CD4-positive, alpha-beta T cell (primary cell): ENCODE measurements at regions of chr12 and their contacts with region 1.

Region 1: GRCh38 chr12:56468216-56469006 is at the start of gene SPRYD4:
- DNase-seq: peak; percentile 88 to 98 (median 93)
- ATAC-seq: peak; percentile 90
- H3K4me3 ChIP-seq: peak within 1 kb of the TSS; percentile 87
- H3K4me3 Mint-ChIP-seq: peak within 1 kb of the TSS; percentile 96
- H3K27ac ChIP-seq: peak within 1 kb of the TSS; percentile 68 to 94
- H3K27ac Mint-ChIP-seq: peak within 1 kb of the TSS; percentile 97
- H3K4me1 ChIP-seq: peaks cover 29% of the 10 kb centered on the region
- H3K4me1 Mint-ChIP-seq: peaks cover 31% of the 10 kb centered on the region
- H3K27me3 ChIP-seq: no peaks in the 10 kb centered on the region
- H3K27me3 Mint-ChIP-seq: no peaks in the 10 kb centered on the region
- CTCF ChIP-seq: peak; percentile 34
- total RNA-seq, gene SPRYD4: 7.4 to 7.9 TPM

Region 2: GRCh38 chr12:56258057-56258819 is 210.2 kb before region 1 on chr12 and contains the start of gene ANKRD52:
- CTCF ChIA-PET with region 1: no interaction called
- POLR2A ChIA-PET with region 1: no interaction called
- intact Hi-C with region 1: loop called in 1 of 2 experiments (anchors 2 kb)
- DNase-seq: peak; percentile 59 to 94 (median 75)
- ATAC-seq: peak; percentile 94
- H3K4me3 ChIP-seq: peak within 1 kb of the TSS; percentile 96
- H3K4me3 Mint-ChIP-seq: peak within 1 kb of the TSS; percentile 98
- H3K27ac ChIP-seq: peak within 1 kb of the TSS; percentile 31 to 58
- H3K27ac Mint-ChIP-seq: peak within 1 kb of the TSS; percentile 77
- H3K4me1 ChIP-seq: peaks cover 27% of the 10 kb centered on the region
- H3K4me1 Mint-ChIP-seq: peaks cover 20% of the 10 kb centered on the region
- H3K27me3 ChIP-seq: no peaks in the 10 kb centered on the region
- H3K27me3 Mint-ChIP-seq: no peaks in the 10 kb centered on the region
- CTCF ChIP-seq: peak; percentile 26
- total RNA-seq, gene ANKRD52: 23.9 to 30.8 TPM

Region 3: DNA sequence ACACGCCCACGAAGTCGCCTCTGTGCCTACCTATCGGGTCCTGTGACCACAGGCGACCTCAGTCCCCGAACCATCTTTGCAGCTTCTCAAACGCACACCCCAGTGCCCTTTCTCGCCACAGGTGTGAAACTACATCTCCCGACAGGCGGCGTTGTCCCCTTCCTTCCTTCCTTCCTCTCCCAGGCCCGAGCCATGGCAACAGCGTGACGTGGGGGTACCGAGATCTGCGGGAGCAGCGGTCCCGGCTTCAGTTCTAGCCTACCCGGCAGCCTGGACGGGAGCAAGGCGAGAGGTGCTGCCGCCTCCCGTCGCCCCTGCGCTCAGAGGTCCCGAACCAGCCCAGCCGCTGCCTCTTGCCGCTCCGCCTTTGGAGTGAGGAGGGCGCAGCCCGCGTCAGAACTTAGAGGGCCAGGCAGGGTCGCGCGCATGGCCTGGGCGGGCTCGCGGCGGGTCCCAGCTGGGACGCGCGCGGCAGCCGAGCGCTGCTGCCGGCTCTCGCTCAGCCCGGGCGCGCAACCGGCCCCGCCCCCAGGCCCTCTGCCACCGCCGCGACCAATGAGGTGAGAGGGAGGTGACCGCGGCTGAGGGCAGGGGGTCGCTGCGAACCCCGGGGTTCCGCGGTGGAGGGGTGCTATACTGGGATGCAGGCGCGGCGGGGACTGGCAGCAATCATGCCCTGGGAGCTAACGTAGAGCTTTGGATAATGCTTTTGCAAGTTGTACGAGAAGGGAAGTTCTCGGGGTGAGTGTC is 201.5 kb before region 1 on chr12 and contains the start of gene COQ10A:
- CTCF ChIA-PET with region 1: interaction called, 4 read pairs
- POLR2A ChIA-PET with region 1: interaction called, 7 read pairs
- intact Hi-C with region 1: loop called in 1 of 2 experiments (anchors 2 kb)
- DNase-seq: peak; percentile 77 to 95 (median 88)
- ATAC-seq: peak; percentile 88
- H3K4me3 ChIP-seq: peak within 1 kb of the TSS; percentile 72
- H3K4me3 Mint-ChIP-seq: peak within 1 kb of the TSS; percentile 96
- H3K27ac ChIP-seq: peak within 1 kb of the TSS; percentile 91 to 96
- H3K27ac Mint-ChIP-seq: peak within 1 kb of the TSS; percentile 91
- H3K4me1 ChIP-seq: peaks cover 16% of the 10 kb centered on the region
- H3K4me1 Mint-ChIP-seq: peaks cover 17% of the 10 kb centered on the region
- H3K27me3 ChIP-seq: no peaks in the 10 kb centered on the region
- H3K27me3 Mint-ChIP-seq: no peaks in the 10 kb centered on the region
- CTCF ChIP-seq: peak; percentile 64
- total RNA-seq, gene COQ10A: 27.6 to 29.2 TPM

Region 4: GRCh38 chr12:56315622-56316473 is 152.6 kb before region 1 on chr12 and contains the start of gene CNPY2:
- CTCF ChIA-PET with region 1: interaction called, 22 read pairs
- POLR2A ChIA-PET with region 1: interaction called, 16 read pairs
- intact Hi-C with region 1: loop called (anchors 1 to 5 kb)
- DNase-seq: peak; percentile 86 to 96 (median 90)
- ATAC-seq: peak; percentile 93
- H3K4me3 ChIP-seq: peak within 1 kb of the TSS; percentile 100
- H3K4me3 Mint-ChIP-seq: peak within 1 kb of the TSS; percentile 99
- H3K27ac ChIP-seq: peak within 1 kb of the TSS; percentile 84 to 98
- H3K27ac Mint-ChIP-seq: peak within 1 kb of the TSS; percentile 98
- H3K4me1 ChIP-seq: peaks cover 17% of the 10 kb centered on the region
- H3K4me1 Mint-ChIP-seq: peaks cover 19% of the 10 kb centered on the region
- H3K27me3 ChIP-seq: no peaks in the 10 kb centered on the region
- H3K27me3 Mint-ChIP-seq: no peaks in the 10 kb centered on the region
- CTCF ChIP-seq: no peak
- total RNA-seq, gene CNPY2: 30.5 to 33.4 TPM

Region 5: GRCh38 chr12:56546680-56547079 is 78.3 kb after region 1 on chr12:
- CTCF ChIA-PET with region 1: no interaction called
- POLR2A ChIA-PET with region 1: no interaction called
- intact Hi-C with region 1: no loop called
- DNase-seq: no peak
- ATAC-seq: no peak
- H3K4me3 ChIP-seq: no peak overlapping the region
- H3K4me3 Mint-ChIP-seq: no peak overlapping the region
- H3K27ac ChIP-seq: no peak overlapping the region
- H3K27ac Mint-ChIP-seq: no peak overlapping the region
- H3K4me1 ChIP-seq: no peaks in the 10 kb centered on the region
- H3K4me1 Mint-ChIP-seq: no peaks in the 10 kb centered on the region
- H3K27me3 ChIP-seq: no peaks in the 10 kb centered on the region
- H3K27me3 Mint-ChIP-seq: no peaks in the 10 kb centered on the region
- CTCF ChIP-seq: no peak

Region 6: DNA sequence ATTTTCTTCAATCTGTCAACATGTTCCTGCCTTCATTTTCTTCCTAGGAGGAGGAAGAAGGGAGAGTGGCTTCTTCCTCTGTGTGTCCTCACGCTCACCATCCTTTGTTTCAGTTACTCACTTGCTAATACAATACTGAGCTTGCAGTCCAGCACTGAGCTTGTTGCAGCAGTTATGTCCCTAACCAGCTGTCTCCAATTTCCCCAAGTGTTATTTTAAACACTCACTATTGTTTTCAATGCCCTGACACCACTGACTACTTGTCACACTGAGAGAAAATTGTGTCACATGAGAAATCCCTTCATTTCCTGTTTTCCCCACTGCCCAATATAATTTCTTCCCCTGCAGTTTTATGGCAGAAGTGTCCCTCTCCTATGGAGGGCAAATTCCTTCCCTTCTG is 348.1 kb after region 1 on chr12:
- CTCF ChIA-PET with region 1: no interaction called
- POLR2A ChIA-PET with region 1: no interaction called
- intact Hi-C with region 1: no loop called
- DNase-seq: no peak
- ATAC-seq: no peak
- H3K4me3 ChIP-seq: no peak overlapping the region
- H3K4me3 Mint-ChIP-seq: no peak overlapping the region
- H3K27ac ChIP-seq: no peak overlapping the region
- H3K27ac Mint-ChIP-seq: no peak overlapping the region
- H3K4me1 ChIP-seq: no peaks in the 10 kb centered on the region
- H3K4me1 Mint-ChIP-seq: no peaks in the 10 kb centered on the region
- H3K27me3 ChIP-seq: peaks cover 2 to 5% of the 10 kb centered on the region in 2 experiments
- H3K27me3 Mint-ChIP-seq: peaks cover 17% of the 10 kb centered on the region
- CTCF ChIP-seq: no peak

Region 7: GRCh38 chr12:57377103-57377840 is 908.9 kb after region 1 on chr12:
- CTCF ChIA-PET with region 1: no interaction called
- POLR2A ChIA-PET with region 1: no interaction called
- intact Hi-C with region 1: no loop called
- DNase-seq: no peak
- ATAC-seq: no peak
- H3K4me3 ChIP-seq: no peak overlapping the region
- H3K4me3 Mint-ChIP-seq: no peak overlapping the region
- H3K27ac ChIP-seq: no peak overlapping the region
- H3K27ac Mint-ChIP-seq: no peak overlapping the region
- H3K4me1 ChIP-seq: no peaks in the 10 kb centered on the region
- H3K4me1 Mint-ChIP-seq: peaks cover 10% of the 10 kb centered on the region
- H3K27me3 ChIP-seq: no peaks in the 10 kb centered on the region
- H3K27me3 Mint-ChIP-seq: no peaks in the 10 kb centered on the region
- CTCF ChIP-seq: no peak